HepG2 (cell line): ENCODE measurements at regions of chr7 and their contacts with region 1.

Region 1: DNA sequence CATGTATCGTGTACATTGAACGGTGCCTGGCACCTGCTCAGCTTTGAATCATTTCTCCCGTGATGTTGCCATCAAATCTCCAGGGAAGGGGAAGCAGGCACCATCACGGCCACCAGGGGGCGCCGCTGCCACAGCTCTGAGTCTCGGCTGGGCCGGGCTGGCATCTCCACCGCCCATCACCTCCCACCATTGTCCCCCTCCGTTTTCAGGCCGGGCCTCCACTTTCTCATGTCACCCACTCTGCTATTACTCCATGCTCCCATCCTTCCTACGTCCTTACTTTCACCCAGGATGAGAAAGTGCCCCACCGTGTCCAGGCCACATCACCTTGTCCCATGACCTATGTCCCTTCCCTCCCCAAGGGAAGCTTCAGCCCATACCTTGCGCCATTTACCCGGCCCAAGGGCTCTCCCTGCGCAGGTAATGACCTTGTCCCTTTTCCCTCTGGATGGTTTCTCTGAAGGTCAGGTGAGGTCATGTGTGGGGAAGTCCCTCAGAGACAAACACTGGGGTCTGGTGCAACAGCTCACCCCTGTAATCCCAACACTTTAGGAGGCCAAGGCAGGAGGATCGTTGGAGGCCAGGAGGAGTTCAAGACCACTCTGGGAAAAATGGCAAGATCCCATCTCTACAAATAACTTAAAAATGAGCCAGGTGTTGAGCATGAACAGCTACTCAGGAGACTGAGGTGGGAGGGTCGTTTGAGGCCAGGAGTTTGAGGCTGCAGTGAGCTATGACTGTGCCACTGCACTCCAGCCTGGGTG is 31.8 kb upstream of the OCM2 start:
- DNase-seq: peak; percentile 49
- ATAC-seq: peak; percentile 91
- H3K4me3 ChIP-seq: no peak overlapping the region
- H3K27ac ChIP-seq: no peak overlapping the region
- H3K4me1 ChIP-seq: 0 out of 2 replicates have a peak, but pooled peaks cover 5% of the 10 kb centered on the region
- H3K27me3 ChIP-seq: peaks cover 2% of the 10 kb centered on the region in 2 experiments; a peak in 1 of 5 replicates
- CTCF ChIP-seq: peak; percentile 92
- EP300 ChIP-seq: no peak
- POLR2A ChIP-seq: no peak
- RAD21 ChIP-seq: peak; percentile 91

Region 2: GRCh38 chr7:98086281-98086718 is 64.5 kb after region 1 on chr7:
- CTCF ChIA-PET with region 1: no interaction called
- POLR2A ChIA-PET with region 1: no interaction called
- in situ Hi-C with region 1: no loop called
- intact Hi-C with region 1: no loop called
- DNase-seq: no peak
- ATAC-seq: peak; percentile 44; the same call in 2 of the 3 replicates
- H3K4me3 ChIP-seq: no peak overlapping the region
- H3K27ac ChIP-seq: no peak overlapping the region
- H3K4me1 ChIP-seq: peaks cover 14% of the 10 kb centered on the region
- H3K27me3 ChIP-seq: no peaks in the 10 kb centered on the region; a peak in 1 of 5 replicates
- CTCF ChIP-seq: no peak
- EP300 ChIP-seq: no peak
- POLR2A ChIP-seq: no peak
- RAD21 ChIP-seq: no peak

Region 3: DNA sequence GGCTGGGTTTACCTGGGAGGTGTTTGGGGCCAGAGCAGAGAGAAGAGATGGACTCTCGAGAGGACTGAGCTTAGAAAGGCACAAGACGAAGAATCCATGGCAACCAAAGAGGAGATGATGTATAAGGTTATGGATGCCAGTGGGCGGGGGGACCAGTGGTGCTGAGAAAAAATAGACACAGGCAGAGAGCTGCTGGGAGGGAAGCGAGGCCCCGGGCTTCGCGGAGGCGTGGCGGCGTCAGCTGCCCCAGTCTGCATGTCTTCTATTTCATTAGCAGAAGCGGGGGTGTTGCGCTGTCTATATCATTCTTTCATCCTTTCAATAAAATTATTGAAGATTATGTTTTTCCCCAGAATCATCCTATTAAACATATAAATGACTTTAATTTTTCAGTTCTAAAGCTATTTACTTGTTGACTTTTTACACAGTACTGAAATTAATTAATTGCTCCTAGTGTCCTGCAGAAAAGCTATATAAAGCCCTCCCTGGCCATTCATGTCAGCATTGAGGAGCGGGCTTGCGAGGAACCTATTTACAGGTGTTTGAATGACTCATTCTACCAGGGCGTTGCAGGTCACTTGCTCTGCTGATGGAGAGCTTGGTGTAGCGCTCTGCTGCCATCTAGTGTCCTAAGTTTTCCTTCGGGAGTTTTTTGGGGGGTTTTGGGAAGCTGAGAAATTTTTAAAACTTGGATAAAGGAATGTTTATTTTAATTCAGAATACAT is 146.6 kb after region 1 on chr7:
- CTCF ChIA-PET with region 1: interaction called, 68 read pairs
- POLR2A ChIA-PET with region 1: interaction called, 4 read pairs
- in situ Hi-C with region 1: loop called (anchors 5 kb)
- intact Hi-C with region 1: loop called (anchors 1 kb)
- DNase-seq: peak; percentile 66
- ATAC-seq: peak; percentile 70
- H3K4me3 ChIP-seq: no peak overlapping the region
- H3K27ac ChIP-seq: no peak overlapping the region
- H3K4me1 ChIP-seq: no peaks in the 10 kb centered on the region
- H3K27me3 ChIP-seq: no peaks in the 10 kb centered on the region
- CTCF ChIP-seq: peak; percentile 72
- EP300 ChIP-seq: no peak
- POLR2A ChIP-seq: no peak
- RAD21 ChIP-seq: peak; percentile 73

Region 4: DNA sequence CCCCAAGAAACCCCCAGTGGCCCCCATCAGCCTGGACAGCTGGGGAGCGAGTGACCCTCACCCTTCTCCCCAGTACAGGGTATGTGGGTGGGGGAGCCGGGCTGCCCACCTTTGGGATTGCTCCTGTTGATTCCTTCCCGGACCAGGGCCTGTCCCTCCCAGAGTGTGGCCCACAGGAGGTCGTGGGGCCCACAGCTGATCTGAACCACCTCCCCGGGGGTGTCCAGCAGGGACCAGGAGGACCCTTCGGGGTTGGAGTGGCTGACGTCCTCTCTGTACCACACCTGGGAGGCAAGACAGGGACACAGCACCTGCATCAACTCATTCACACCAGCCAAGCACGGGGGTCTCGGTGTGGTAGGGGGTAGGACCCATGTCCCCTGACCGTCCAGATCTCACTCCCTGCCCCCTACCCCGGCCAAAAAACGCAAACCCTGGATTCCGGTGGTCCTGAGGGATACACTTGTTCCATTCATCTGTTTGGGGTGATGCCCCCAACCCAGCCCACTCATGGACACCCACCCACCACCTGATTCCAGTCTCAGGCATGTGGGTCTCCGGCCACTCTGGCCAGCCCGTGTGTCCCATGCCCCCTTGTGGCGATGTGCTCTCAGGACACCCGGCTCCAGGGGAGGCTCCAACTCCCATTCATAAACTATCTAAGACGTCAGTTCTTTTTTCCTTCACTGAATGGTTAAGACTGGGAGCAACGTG is 219.3 kb after region 1 on chr7:
- CTCF ChIA-PET with region 1: interaction called, 12 read pairs
- POLR2A ChIA-PET with region 1: no interaction called
- in situ Hi-C with region 1: loop called (anchors 5 kb)
- intact Hi-C with region 1: loop called (anchors 1 kb)
- DNase-seq: peak; percentile 27
- ATAC-seq: peak; percentile 85
- H3K4me3 ChIP-seq: no peak overlapping the region
- H3K27ac ChIP-seq: no peak overlapping the region
- H3K4me1 ChIP-seq: no peaks in the 10 kb centered on the region
- H3K27me3 ChIP-seq: no peaks in the 10 kb centered on the region
- CTCF ChIP-seq: peak; percentile 94
- EP300 ChIP-seq: no peak
- POLR2A ChIP-seq: no peak
- RAD21 ChIP-seq: peak; percentile 85